ENCODE measurements at regions of chr7 and their contacts with region 1.

Region 1: DNA sequence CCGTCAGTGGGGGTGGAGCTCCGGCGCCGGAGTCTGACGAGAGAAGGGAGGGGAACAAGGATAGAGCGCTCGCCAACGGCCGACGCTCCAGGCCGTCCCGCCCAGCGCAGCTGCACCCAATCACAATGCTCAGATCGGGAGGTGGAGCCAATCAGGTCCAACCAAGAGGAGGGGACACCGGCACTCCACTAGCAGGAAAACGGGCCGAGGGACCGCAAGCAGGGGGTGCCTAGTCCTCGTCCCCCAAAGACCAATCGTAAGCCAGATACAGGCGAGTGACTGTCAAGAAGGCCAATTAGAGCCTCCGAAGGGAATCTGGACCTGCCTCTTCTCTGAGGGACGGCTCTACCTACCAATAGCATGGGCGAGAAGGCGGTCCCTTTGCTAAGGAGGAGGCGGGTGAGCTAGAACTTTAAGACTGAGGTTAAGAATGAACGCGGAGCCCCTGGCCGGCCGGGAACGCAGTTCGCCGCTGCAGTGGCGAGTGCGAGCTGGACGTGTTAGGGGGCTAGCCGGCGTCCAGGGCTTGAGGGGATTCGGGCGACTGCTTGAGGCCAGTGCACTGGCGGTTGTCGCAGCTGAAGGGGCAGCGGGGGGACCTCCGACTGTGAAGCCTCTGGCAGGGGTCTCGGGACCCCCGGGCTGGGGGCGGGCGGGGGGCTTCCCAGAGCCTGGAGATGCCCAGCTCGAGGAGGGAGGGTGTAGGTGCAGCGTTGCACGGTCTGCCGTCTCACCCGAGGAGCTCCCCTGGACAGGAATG is at the start of gene FBXO24:
- DNase-seq: peak; percentile 99
- ATAC-seq: peak; percentile 91
- H3K4me3 ChIP-seq: peak within 1 kb of the TSS; percentile 80 to 98 (median 86)
- H3K27ac ChIP-seq: peak within 1 kb of the TSS; percentile 81
- H3K4me1 ChIP-seq: peaks cover 56% of the 10 kb centered on the region
- H3K27me3 ChIP-seq: peaks cover 0 to 7% of the 10 kb centered on the region in 2 experiments; a peak in 3 of 5 replicates
- CTCF ChIP-seq: no peak
- EP300 ChIP-seq: no peak
- POLR2A ChIP-seq: peak in 1 of 2 experiments; percentile 80; a peak in 2 of 4 replicates
- RAD21 ChIP-seq: no peak
- total RNA-seq, gene FBXO24: 0.13 and 0.20 TPM in 2 replicates

Region 2: GRCh38 chr7:100444311-100445278 is 141.9 kb before region 1 on chr7:
- CTCF ChIA-PET with region 1: no interaction called
- POLR2A ChIA-PET with region 1: interaction called, 11 read pairs
- in situ Hi-C with region 1: no loop called
- intact Hi-C with region 1: no loop called
- DNase-seq: peak; percentile 96
- ATAC-seq: peak; percentile 85
- H3K4me3 ChIP-seq: peak overlapping the region in 2 of 3 experiments; percentile 27 to 51; a peak in 4 of 6 replicates
- H3K27ac ChIP-seq: peak overlapping the region; percentile 94
- H3K4me1 ChIP-seq: peaks cover 53% of the 10 kb centered on the region
- H3K27me3 ChIP-seq: no peaks in the 10 kb centered on the region
- CTCF ChIP-seq: no peak
- EP300 ChIP-seq: peak in 1 of 2 experiments; percentile 82; a peak in 3 of 4 replicates
- POLR2A ChIP-seq: peak; percentile 53 to 63; a peak in 2 of 4 replicates
- RAD21 ChIP-seq: no peak

Region 3: GRCh38 chr7:100545360-100546128 is 40.9 kb before region 1 on chr7:
- CTCF ChIA-PET with region 1: no interaction called
- POLR2A ChIA-PET with region 1: interaction called, 19 read pairs
- in situ Hi-C with region 1: no loop called
- intact Hi-C with region 1: no loop called
- DNase-seq: peak; percentile 95
- ATAC-seq: peak; percentile 87
- H3K4me3 ChIP-seq: peak overlapping the region; percentile 17 to 39 (median 23); a peak in 5 of 6 replicates
- H3K27ac ChIP-seq: peak overlapping the region; percentile 94
- H3K4me1 ChIP-seq: peaks cover 91% of the 10 kb centered on the region
- H3K27me3 ChIP-seq: no peaks in the 10 kb centered on the region
- CTCF ChIP-seq: peak; percentile 44
- EP300 ChIP-seq: peak in 1 of 2 experiments; percentile 68; a peak in 2 of 4 replicates
- POLR2A ChIP-seq: peak in 1 of 2 experiments; percentile 58; a peak in 1 of 4 replicates
- RAD21 ChIP-seq: peak; percentile 29; the same call in 1 of the 2 replicates

Region 4: DNA sequence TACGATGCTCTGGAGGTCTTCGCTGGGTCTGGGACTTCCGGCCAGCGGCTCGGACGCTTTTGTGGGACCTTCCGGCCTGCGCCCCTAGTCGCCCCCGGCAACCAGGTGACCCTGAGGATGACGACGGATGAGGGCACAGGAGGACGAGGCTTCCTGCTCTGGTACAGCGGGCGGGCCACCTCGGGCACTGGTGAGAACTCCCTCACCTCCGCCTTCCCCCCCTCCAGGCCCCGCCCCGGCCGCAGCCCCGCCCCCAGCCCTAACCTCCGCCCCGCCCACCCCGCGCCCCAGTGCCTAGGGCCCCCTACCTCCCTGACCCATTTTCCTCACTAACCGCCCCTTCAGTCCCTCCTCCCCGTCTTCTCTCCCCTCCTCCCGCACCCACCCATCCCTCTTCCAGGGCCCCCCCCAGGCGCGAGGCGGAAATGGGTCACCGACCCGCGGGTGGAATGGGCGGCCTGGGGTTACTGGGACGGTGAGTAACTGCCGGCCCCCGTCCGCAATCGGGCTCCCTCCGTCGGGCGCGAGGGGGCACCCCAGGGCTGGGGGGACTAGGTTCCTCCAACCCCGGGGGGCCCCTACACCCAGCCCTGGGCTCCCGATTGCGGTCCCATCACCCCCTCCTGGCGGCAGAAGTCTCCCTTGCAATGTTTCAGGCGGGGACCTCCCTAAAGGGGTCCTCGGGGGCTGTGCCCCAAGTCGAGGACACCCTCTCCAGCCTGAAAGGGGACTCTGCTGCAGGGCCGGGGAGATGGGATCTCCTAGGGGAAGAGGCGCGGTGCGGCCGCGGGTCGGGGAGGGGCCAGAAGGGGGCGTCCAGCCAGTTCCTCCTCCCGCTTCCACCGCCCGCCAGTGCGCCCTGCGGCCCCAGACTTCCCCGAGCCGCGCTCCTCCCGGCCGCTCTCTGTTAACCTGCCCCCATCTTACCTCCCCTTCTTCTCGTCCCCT is 17.9 kb after region 1 on chr7:
- CTCF ChIA-PET with region 1: no interaction called
- POLR2A ChIA-PET with region 1: interaction called, 19 read pairs
- in situ Hi-C with region 1: no loop called
- intact Hi-C with region 1: no loop called
- DNase-seq: no peak
- ATAC-seq: no peak
- H3K4me3 ChIP-seq: no peak overlapping the region
- H3K27ac ChIP-seq: no peak overlapping the region
- H3K4me1 ChIP-seq: peaks cover 41% of the 10 kb centered on the region
- H3K27me3 ChIP-seq: 0 out of 5 replicates have a peak, but pooled peaks cover 0 to 2% of the 10 kb centered on the region in 2 experiments
- CTCF ChIP-seq: no peak
- EP300 ChIP-seq: no peak
- POLR2A ChIP-seq: no peak
- RAD21 ChIP-seq: no peak

Region 5: DNA sequence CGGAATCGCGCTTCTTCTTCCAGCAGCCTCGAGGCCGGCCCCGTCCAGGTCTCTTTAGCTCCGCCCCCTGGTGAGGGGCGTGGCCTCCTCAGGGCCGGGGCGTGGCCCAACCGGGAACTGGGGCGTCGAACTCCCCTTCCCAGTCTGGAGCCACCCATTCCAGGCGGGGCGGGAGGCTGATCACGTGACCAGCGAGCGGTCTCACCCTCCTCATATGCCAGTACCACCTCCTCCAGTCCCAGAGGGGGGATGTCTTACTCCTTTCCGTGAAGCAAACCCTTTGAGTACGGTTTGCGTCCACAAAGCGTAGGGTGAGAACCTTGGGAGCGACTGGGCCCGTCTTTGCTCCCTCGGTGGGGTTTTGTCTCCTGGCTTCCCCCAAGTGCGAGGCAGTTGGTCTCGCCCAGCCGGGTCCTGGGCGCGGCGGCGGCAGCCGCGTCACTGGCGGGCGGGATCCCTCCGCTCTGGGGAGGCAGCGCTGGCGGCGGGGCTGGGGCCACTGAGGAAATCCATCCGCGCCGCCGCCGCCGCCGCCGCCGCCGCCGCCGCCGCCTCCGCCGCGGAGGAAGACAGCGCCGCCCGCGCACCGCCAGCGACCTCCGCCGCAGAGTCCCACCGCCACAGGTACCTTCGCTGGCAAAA is 87.0 kb after region 1 on chr7 and contains the start of gene GNB2:
- CTCF ChIA-PET with region 1: no interaction called
- POLR2A ChIA-PET with region 1: interaction called, 13 read pairs
- in situ Hi-C with region 1: no loop called
- intact Hi-C with region 1: no loop called
- DNase-seq: peak; percentile 96
- ATAC-seq: peak; percentile 65
- H3K4me3 ChIP-seq: peak within 1 kb of the TSS; percentile 92 to 97 (median 96)
- H3K27ac ChIP-seq: peak within 1 kb of the TSS; percentile 96
- H3K4me1 ChIP-seq: peaks cover 20% of the 10 kb centered on the region
- H3K27me3 ChIP-seq: peaks cover 0 to 4% of the 10 kb centered on the region in 2 experiments; a peak in 2 of 5 replicates
- CTCF ChIP-seq: no peak
- EP300 ChIP-seq: no peak
- POLR2A ChIP-seq: peak in 1 of 2 experiments; percentile 58; a peak in 1 of 4 replicates
- RAD21 ChIP-seq: peak; percentile 73
- total RNA-seq, gene GNB2: 48.3 and 64.3 TPM in 2 replicates

Region 6: GRCh38 chr7:100929780-100930135 is 343.3 kb after region 1 on chr7:
- CTCF ChIA-PET with region 1: no interaction called
- POLR2A ChIA-PET with region 1: no interaction called
- in situ Hi-C with region 1: no loop called
- intact Hi-C with region 1: no loop called
- DNase-seq: no peak
- ATAC-seq: no peak
- H3K4me3 ChIP-seq: no peak overlapping the region
- H3K27ac ChIP-seq: no peak overlapping the region
- H3K4me1 ChIP-seq: no peaks in the 10 kb centered on the region
- H3K27me3 ChIP-seq: peaks cover 0 to 10% of the 10 kb centered on the region in 2 experiments; a peak in 1 of 5 replicates
- CTCF ChIP-seq: no peak
- EP300 ChIP-seq: no peak
- POLR2A ChIP-seq: no peak
- RAD21 ChIP-seq: no peak

Region 7: DNA sequence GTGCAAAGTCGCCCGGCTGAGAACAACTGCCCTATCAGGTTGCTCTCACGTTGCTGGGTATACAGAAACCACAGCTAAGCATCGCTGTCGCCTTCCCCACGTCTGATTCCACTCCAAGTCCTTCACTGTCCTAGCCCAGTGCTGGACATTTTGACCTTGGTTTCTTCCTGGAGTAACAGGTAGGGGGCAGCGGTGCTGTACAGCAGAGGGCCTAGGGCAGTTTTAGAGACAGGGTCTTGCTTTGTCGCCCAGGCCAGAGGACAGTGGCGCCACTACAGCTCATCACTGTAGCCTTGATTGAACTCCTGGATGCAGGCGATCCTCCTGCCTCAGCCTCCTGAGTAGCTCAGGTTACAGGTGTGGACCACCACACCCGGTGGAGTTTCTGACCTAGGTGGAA is 648.6 kb after region 1 on chr7:
- CTCF ChIA-PET with region 1: no interaction called
- POLR2A ChIA-PET with region 1: no interaction called
- in situ Hi-C with region 1: no loop called
- intact Hi-C with region 1: no loop called
- DNase-seq: peak; percentile 29
- ATAC-seq: peak; percentile 12
- H3K4me3 ChIP-seq: no peak overlapping the region
- H3K27ac ChIP-seq: no peak overlapping the region
- H3K4me1 ChIP-seq: peaks cover 65% of the 10 kb centered on the region
- H3K27me3 ChIP-seq: no peaks in the 10 kb centered on the region
- CTCF ChIP-seq: peak; percentile 62
- EP300 ChIP-seq: no peak
- POLR2A ChIP-seq: 0 out of 4 replicates have a peak, but pooled peaks of 1 of the 2 experiments have one; percentile 42
- RAD21 ChIP-seq: peak; percentile 62

Measured in HepG2 (cell line).